A673 (cell line): ENCODE measurements at regions of chr12 and their contacts with region 1.

Region 1: DNA sequence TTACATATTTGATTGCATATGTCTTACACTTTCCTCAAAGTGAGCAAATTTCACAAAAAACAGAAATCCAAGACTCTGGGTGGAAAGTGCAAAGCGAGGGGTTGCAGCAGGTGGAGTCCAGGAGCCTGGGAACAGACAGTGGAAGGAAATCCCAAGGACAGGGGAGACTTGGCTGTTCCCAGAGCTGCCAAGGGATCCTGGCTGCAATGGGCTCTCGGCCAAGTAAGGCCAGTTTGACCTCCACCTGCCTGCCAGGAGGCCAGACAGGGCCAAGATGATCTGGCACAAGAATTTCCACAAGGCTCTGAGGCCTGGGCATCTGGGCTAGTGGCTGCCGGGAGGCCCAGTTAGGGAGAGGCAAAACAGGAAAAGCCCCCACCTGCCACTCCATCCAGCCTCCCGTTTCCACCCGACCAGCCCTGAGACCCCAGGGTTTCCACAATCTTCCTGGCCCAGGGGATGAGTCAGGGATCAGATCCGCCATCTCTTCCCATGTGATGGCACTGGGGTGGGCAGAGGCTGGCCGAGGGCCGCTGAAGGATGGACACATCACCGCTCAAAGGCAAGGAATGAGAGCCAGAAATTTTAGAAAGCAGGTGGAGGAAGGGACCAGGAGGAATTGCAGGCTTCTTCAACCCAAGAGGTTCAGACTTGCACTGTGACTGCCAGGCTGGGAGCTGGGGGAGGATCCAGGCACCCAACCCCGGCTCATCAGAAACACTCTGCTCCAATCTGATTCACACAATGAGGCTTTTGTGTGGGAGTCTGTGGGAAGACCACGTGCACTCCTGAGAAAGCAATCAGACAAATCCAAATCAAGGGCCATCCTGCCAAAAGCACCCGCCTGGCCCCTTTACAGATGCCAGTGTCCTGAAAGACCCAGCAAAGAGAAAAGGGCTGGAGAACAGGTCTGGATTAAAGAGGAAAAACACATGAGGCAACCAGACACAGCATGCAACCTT is 16.3 kb downstream of the SCARB1 start:
- DNase-seq: no peak
- H3K4me3 ChIP-seq: no peak overlapping the region
- H3K27ac ChIP-seq: peak overlapping the region; percentile 45
- H3K4me1 ChIP-seq: no peaks in the 10 kb centered on the region
- H3K27me3 ChIP-seq: no peaks in the 10 kb centered on the region
- CTCF ChIP-seq: no peak

Region 2: GRCh38 chr12:124399622-124400021 is 447.8 kb before region 1 on chr12:
- CTCF ChIA-PET with region 1: no interaction called
- POLR2A ChIA-PET with region 1: no interaction called
- intact Hi-C with region 1: no loop called
- DNase-seq: no peak
- H3K4me3 ChIP-seq: no peak overlapping the region
- H3K27ac ChIP-seq: no peak overlapping the region
- H3K4me1 ChIP-seq: peaks cover 33% of the 10 kb centered on the region
- H3K27me3 ChIP-seq: no peaks in the 10 kb centered on the region
- CTCF ChIP-seq: peak; percentile 68

Region 3: DNA sequence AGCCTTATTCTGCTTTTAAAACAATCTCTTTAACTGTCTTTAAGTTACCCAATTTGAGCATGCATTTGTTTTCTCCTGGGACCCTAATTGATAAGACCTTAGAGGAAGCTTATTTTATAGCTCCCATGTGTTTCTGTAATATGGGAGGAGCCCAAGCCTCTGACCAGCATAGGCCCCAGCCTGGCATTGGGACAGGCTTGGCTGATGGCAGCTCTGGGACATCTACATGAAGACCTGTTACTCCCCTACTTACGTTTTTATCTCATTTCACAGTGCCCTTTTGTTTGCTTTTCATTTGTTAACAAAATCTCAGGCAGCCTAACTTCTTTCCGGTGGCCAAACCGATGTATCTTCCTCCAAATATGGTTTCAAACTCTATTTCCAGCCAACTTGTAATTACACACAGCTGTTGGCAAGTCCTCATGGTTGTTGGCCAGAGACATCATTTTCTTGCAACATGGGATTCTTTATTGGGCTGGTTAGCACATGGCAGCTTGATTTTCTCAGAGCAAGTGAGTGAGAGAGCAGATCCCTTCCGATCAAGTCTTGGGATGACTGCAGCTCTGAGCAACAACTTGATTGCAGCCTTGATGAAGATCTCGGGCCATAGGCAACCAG is 1335.3 kb after region 1 on chr12:
- CTCF ChIA-PET with region 1: no interaction called
- POLR2A ChIA-PET with region 1: interaction called, 14 read pairs
- intact Hi-C with region 1: no loop called
- DNase-seq: peak; percentile 52
- H3K4me3 ChIP-seq: no peak overlapping the region
- H3K27ac ChIP-seq: peak overlapping the region; percentile 29
- H3K4me1 ChIP-seq: peaks cover 10% of the 10 kb centered on the region
- H3K27me3 ChIP-seq: peaks cover 3% of the 10 kb centered on the region
- CTCF ChIP-seq: no peak